Panc1 (cell line): ENCODE measurements at regions of chr20 and their contacts with region 1.

Region 1: GRCh38 chr20:30500829-30501440 is 756.5 kb upstream of the DEFB115 start:
- DNase-seq: no peak
- ATAC-seq: no peak
- H3K4me3 ChIP-seq: peak overlapping the region in 1 of 2 experiments; percentile 10; a peak in 2 of 4 replicates
- H3K27ac ChIP-seq: no peak overlapping the region
- H3K4me1 ChIP-seq: no peaks in the 10 kb centered on the region
- H3K27me3 ChIP-seq: 0 out of 2 replicates have a peak, but pooled peaks cover 2% of the 10 kb centered on the region
- CTCF ChIP-seq: no peak; the same call in 1 of the 2 replicates

Region 2: GRCh38 chr20:29741894-29742698 is 758.8 kb before region 1 on chr20:
- CTCF ChIA-PET with region 1: no interaction called
- POLR2A ChIA-PET with region 1: no interaction called
- in situ Hi-C with region 1: no loop called
- intact Hi-C with region 1: no loop called
- DNase-seq: no peak
- ATAC-seq: no peak
- H3K4me3 ChIP-seq: no peak overlapping the region
- H3K27ac ChIP-seq: no peak overlapping the region
- H3K4me1 ChIP-seq: no peaks in the 10 kb centered on the region
- H3K27me3 ChIP-seq: no peaks in the 10 kb centered on the region
- CTCF ChIP-seq: no peak

Region 3: GRCh38 chr20:30376767-30377666 is 123.9 kb before region 1 on chr20:
- CTCF ChIA-PET with region 1: no interaction called
- POLR2A ChIA-PET with region 1: no interaction called
- in situ Hi-C with region 1: no loop called
- intact Hi-C with region 1: loop called (anchors 10 kb)
- DNase-seq: peak; percentile 67
- ATAC-seq: peak; percentile 99
- H3K4me3 ChIP-seq: peak overlapping the region; percentile 90 to 98
- H3K27ac ChIP-seq: peak overlapping the region; percentile 80
- H3K4me1 ChIP-seq: no peaks in the 10 kb centered on the region
- H3K27me3 ChIP-seq: no peaks in the 10 kb centered on the region
- CTCF ChIP-seq: peak; percentile 98

Region 4: GRCh38 chr20:30610029-30610693 is 109.2 kb after region 1 on chr20:
- CTCF ChIA-PET with region 1: no interaction called
- POLR2A ChIA-PET with region 1: no interaction called
- in situ Hi-C with region 1: no loop called
- intact Hi-C with region 1: loop called (anchors 10 kb)
- DNase-seq: no peak
- ATAC-seq: no peak
- H3K4me3 ChIP-seq: no peak overlapping the region
- H3K27ac ChIP-seq: no peak overlapping the region
- H3K4me1 ChIP-seq: no peaks in the 10 kb centered on the region
- H3K27me3 ChIP-seq: no peaks in the 10 kb centered on the region
- CTCF ChIP-seq: no peak